ENCODE measurements at regions of chr12 and their contacts with region 1.

Region 1: DNA sequence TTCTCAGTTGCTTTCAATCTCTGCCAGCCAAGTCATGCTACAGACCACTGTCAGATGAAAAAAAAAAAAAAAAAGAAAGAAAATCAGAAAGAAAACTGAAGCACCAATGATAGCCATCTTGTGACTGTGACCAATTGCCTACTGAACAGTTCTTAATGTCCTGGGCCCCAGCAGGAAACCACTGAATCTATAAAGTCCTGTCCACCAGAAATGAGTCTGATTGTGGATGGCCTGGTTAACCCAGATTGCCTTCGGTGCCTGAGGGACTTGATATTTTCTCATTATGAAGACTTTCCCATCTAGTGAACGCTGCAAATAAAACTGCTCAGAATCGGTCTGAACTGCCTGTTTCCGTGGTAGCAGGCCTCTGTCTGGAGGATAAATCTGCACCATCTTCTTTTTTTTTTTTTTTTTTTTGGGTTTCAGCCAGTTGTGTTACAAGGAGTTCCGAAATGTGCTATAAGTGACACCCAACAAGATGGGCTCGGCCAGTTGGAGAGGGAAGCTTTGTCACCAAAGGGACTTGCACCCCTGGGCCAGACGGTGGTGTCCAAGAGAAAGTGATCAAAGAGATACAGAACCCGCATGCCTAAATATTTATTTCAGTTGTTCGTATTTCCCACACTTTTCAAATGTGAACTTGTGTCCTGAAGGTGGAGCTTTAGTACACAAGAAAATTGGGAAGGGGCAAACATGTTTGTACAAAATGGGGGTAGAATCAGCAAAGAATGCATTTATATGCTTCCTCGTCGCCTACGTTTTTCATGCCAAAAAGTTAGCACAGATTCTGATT is 3.0 kb upstream of the PLXNC1 start:
- DNase-seq: no peak
- CTCF ChIP-seq: peak; percentile 50

Region 2: DNA sequence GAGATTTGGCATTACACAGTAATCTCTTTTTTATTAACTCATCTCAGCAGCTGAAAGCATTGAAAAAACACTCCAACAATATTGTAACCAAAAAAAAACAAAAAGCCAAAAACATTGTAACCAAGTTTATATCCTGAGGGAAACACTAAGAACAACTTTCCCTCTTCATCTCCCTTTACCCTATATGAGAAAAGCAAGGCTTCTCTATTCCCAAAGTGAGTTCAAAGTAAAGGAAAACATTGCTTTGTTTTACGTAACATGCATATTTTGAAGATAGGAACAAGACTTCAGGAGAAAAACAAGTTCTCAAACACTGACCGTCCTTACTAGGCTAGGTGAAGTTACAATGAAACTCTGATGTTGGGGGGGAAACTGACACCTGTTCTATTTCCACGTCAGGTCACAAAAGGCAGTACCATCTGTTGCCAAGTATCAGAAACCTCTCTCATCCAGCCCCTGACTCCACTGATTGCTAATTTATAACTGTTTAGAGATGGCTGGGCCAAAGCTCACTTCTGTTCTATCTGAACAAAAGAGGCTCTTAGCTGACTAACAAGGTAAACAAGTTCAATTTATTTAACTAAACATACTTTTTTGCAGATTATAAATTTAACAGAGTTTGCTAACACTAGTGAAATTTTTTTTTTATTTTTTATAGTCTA is 64.9 kb before region 1 on chr12:
- CTCF ChIA-PET with region 1: no interaction called
- POLR2A ChIA-PET with region 1: no interaction called
- DNase-seq: no peak
- CTCF ChIP-seq: no peak

Region 3: GRCh38 chr12:94133964-94134795 is 11.2 kb before region 1 on chr12:
- CTCF ChIA-PET with region 1: interaction called, 42 read pairs
- POLR2A ChIA-PET with region 1: interaction called, 3 read pairs
- DNase-seq: peak; percentile 52
- CTCF ChIP-seq: peak; percentile 60

Region 4: GRCh38 chr12:94435511-94435927 is 290.1 kb after region 1 on chr12:
- CTCF ChIA-PET with region 1: interaction called, 14 read pairs
- POLR2A ChIA-PET with region 1: no interaction called
- DNase-seq: no peak
- CTCF ChIP-seq: no peak

Region 5: GRCh38 chr12:94532490-94533422 is 387.4 kb after region 1 on chr12:
- CTCF ChIA-PET with region 1: interaction called, 15 read pairs
- POLR2A ChIA-PET with region 1: no interaction called
- DNase-seq: peak; percentile 83
- CTCF ChIP-seq: peak; percentile 81

Measured in GM10248 (cell line).